ENCODE measurements at regions of chr5 and their contacts with region 1.

Region 1: GRCh38 chr5:66171349-66172344 is 27.5 kb downstream of the SREK1 start:
- DNase-seq: peak; percentile 42 to 51
- H3K4me3 ChIP-seq: no peak overlapping the region
- H3K4me1 ChIP-seq: peaks cover 8% of the 10 kb centered on the region
- H3K27me3 ChIP-seq: no peaks in the 10 kb centered on the region

Region 2: DNA sequence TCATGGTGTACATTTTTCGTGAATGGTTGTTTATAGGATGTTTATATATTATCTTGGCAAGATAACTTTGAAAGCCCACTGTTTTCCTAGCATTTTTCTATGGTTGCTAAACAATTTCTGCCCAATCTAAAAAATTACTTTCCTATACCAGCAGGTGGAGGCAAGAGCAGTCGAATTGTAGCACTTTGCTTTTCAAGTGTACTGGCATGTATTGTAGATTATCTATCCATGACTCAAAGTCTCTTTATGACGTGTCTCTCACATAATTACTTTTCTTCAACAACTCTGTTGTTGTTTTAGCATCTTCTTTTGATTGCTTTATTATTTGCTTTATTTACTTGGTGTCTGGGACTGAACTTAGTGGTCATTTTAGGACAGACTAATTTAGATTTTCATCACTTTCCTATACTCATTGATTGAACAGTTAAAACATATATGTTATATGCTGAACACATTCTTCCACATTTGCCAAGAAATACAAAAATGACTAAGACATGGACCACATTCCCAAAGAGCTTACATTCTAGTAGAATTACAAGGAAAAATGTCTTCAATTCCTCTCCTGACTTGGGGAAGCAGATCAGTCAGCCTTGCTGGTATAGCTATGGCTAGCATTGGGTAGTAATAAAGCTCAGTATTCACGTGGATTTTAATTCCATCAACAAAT is 428.9 kb before region 1 on chr5:
- in situ Hi-C with region 1: loop called (anchors 25 kb)
- DNase-seq: peak; percentile 37 to 63
- H3K4me3 ChIP-seq: no peak overlapping the region
- H3K4me1 ChIP-seq: no peaks in the 10 kb centered on the region
- H3K27me3 ChIP-seq: no peaks in the 10 kb centered on the region

Region 3: DNA sequence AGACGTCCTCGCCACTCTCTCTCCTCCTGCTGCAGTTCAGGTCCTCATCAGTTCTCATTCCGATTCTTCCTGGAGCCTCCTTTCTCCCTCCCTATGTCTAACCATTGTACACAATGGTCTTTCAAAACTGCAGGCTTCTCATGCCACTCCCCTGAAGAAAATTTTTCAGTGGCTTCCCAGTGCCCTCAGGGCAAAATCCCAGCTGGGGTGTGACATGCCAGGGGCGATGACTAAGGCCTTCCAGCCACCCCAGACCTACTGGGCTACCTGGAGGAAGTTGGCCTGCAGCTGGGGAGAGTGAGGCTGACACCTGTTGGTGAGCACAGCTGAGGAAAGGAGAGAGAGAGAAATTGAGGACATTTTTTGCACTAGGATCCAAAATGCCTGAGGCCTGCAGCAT is 37.7 kb after region 1 on chr5:
- in situ Hi-C with region 1: no loop called
- DNase-seq: peak in 1 of 2 experiments; percentile 16
- H3K4me3 ChIP-seq: no peak overlapping the region
- H3K4me1 ChIP-seq: no peaks in the 10 kb centered on the region
- H3K27me3 ChIP-seq: no peaks in the 10 kb centered on the region

Region 4: DNA sequence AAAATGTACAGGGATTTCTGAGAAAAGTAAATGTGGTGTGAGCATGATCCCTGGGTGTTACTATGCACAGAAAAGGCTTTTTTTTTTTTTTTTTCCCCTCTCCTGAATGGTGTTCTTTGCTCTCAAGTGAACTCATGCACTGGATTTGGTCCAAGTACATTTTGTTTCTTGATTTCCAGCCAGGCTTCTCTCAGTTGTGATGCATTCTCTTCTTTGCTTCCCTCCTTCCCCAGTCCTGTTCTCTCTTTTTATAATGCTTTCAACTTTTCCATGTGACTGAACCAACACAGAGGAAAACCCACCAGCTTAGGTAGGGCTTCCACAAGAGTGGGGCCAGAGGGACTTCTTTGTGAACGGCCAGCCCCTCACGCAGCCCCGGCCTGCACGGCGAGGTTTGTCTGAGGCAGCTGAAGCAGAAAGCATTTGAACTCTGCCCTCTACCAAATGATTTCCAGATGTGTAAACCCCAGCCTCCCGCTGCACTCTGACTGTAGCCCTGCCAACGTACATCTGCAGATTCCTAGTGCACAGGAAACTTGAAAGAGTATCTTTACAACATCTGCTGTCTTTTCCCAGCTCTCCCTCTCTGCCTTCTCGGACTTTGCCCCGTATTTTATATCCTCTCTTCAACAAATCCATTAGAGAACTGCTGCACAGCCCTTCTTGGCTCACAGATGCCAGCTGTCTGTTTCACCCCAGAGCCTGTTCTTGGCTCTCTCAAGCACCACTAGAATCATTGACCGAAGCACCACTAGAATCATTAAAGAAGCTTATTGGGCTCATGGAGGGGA is 1096.8 kb after region 1 on chr5:
- in situ Hi-C with region 1: no loop called
- DNase-seq: no peak
- H3K4me3 ChIP-seq: no peak overlapping the region
- H3K4me1 ChIP-seq: no peaks in the 10 kb centered on the region
- H3K27me3 ChIP-seq: no peaks in the 10 kb centered on the region

Measured in HAP-1 (cell line).